ENCODE measurements at regions of chr10 and their contacts with region 1.

Region 1: DNA sequence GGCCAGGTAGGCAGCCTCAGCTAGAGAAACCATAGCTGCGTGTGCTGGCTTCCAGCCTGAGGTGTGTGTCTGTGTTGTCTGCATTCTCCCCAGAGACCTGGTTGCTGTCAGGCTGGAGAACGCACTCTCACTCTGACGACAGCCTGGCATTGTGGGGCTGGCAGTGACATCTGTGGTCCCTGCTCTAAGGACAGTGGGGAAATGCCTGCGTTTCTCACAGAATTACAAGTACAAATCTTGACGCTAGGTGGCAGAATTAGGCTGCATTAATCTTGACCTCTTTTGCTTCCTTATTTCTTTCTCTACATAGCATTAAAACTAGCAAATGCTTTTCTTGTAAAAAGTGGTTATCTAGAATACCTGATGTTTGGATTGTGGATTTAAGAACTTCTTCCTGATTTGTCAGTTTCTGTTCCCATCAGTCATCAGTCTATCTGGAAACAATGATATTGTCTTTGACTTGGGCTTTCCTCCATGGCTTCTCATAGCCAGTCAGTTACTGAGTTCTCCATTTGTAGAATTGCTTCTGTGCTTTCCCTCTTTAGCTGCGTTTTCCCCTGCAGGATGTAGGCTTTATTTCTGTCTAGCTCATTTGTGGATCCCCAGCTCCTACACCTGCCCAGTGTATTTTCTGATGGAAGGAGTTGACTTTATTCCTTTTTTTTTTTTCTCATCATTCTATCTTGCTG is 86.0 kb downstream of the FANK1 start:
- DNase-seq: no peak

Region 2: GRCh38 chr10:125538947-125539731 is 443.3 kb before region 1 on chr10:
- intact Hi-C with region 1: no loop called
- DNase-seq: no peak

Region 3: GRCh38 chr10:126302826-126303665 is 320.6 kb after region 1 on chr10:
- intact Hi-C with region 1: loop called in 1 of 2 experiments (anchors 5 kb)
- DNase-seq: no peak

Region 4: GRCh38 chr10:126387023-126387921 is 404.9 kb after region 1 on chr10:
- intact Hi-C with region 1: loop called in 1 of 2 experiments (anchors 2 kb)
- DNase-seq: peak; percentile 89

Region 5: DNA sequence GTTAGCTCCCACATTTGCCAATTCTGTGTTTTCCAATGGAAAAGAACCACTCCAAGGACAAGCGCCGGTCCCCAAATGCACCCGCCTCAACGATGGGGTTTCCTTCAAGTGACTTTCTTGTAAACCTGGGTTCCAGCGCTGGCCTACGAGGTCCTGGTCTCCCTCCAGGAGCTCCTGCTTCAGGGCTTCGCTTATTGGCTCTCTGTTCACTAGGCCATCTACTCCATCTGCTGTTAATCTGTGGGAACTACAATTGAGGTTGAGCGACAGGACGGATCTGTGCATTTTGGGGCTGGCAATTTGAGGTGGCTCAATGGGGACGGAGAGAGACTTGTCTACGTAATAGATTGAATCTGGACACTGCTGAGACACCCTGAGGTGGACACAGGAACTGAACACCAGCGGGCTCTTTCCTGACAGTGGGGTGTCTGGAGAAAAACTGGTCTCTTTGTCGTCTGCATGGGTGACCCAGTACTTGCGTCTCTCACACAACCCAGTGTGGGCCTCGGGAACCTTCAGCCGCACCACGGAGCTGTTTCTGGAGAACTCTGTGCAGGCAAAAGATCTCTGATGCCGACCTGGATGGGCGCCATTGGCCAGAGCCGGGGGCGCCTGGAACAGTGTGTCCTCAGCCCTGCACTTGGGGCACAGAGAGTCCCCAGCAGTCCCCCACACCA is 521.8 kb after region 1 on chr10:
- intact Hi-C with region 1: loop called in 1 of 2 experiments (anchors 10 kb)
- DNase-seq: peak; percentile 80

Measured in posterior vena cava (tissue), 2 donors.